Activated B cell treated with CpG ODN at 0.5 μM for 24 hours (primary cell): ENCODE measurements at regions of chr4 and their contacts with region 1.

Region 1: GRCh38 chr4:13654158-13654797 is 26.8 kb upstream of the BOD1L1 start:
- DNase-seq: peak; percentile 71
- ATAC-seq: peak; percentile 93
- H3K4me3 Mint-ChIP-seq: peak overlapping the region; percentile 85
- H3K27ac Mint-ChIP-seq: no peak overlapping the region
- H3K4me1 Mint-ChIP-seq: peaks cover 13% of the 10 kb centered on the region
- H3K27me3 Mint-ChIP-seq: peaks cover 6% of the 10 kb centered on the region
- CTCF ChIP-seq: peak; percentile 43

Region 2: DNA sequence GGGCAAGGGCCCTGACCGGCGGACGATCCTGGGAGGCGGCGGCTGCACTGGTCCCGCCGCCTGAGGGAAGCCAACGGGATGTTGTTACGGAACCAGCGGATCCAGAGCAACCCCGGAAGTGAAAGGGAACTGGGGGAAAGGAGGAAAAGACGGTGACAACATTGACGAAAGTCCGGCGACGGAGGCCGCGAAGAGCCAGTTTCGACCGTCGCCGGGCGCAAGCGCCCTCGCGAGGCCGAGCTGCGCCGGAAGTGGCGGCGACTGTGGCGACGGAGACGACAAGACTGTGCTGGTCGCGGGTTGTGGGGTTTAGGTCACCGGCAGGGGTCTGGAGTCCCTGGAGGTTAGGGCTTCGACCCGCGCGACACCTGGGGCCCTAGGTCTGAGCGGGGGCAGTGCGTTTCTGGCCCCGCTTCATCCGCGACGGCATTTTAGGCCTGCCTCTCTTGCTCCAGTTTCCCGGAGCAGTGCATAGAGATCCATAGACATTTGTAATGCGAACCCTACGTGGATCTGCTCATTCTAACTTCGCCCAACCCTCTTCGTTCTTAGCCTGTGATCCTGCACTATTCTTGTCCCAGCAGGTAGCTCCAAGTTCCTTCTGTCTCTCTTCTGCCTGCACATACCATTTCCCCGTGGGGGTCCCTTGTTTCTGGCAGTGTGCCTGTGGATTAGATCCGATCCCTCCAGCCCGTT is 26.5 kb before region 1 on chr4 and contains the start of gene BOD1L1:
- CTCF ChIA-PET with region 1: interaction called, 11 read pairs
- POLR2A ChIA-PET with region 1: no interaction called
- intact Hi-C with region 1: loop called (anchors 1 kb)
- DNase-seq: peak; percentile 80
- ATAC-seq: peak; percentile 86
- H3K4me3 Mint-ChIP-seq: peak within 1 kb of the TSS; percentile 98
- H3K27ac Mint-ChIP-seq: peak within 1 kb of the TSS; percentile 97
- H3K4me1 Mint-ChIP-seq: peaks cover 53% of the 10 kb centered on the region
- H3K27me3 Mint-ChIP-seq: no peaks in the 10 kb centered on the region
- CTCF ChIP-seq: no peak
- total RNA-seq, gene BOD1L1: 77.1 and 79.3 TPM in 2 replicates

Region 3: DNA sequence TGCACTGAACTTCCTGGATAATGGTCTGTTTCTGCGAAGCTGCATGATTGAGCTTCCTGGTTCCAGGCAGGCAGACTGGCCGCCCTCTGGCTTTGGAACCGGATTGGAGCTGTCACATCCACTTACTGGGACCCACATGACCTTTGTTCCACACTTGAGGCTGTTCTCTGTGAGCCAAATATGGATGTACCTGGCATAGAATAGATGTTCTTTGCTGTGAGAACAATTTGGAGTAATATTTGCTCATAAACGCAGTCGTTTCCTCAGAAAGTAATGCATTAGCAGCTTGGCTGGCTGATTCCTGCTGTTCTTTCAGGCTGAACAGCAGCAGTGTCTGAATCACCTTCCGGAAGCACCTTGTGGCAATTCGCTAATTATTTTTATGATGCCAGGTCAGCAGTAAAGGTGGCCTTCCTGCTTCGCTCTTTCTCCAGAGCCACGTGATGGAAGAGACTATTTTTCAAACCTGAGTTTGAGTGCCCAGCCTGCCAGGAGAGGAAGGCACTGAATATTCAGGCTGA is 51.3 kb after region 1 on chr4:
- CTCF ChIA-PET with region 1: no interaction called
- POLR2A ChIA-PET with region 1: no interaction called
- intact Hi-C with region 1: no loop called
- DNase-seq: no peak
- ATAC-seq: no peak
- H3K4me3 Mint-ChIP-seq: no peak overlapping the region
- H3K27ac Mint-ChIP-seq: no peak overlapping the region
- H3K4me1 Mint-ChIP-seq: no peaks in the 10 kb centered on the region
- H3K27me3 Mint-ChIP-seq: no peaks in the 10 kb centered on the region
- CTCF ChIP-seq: no peak

Region 4: DNA sequence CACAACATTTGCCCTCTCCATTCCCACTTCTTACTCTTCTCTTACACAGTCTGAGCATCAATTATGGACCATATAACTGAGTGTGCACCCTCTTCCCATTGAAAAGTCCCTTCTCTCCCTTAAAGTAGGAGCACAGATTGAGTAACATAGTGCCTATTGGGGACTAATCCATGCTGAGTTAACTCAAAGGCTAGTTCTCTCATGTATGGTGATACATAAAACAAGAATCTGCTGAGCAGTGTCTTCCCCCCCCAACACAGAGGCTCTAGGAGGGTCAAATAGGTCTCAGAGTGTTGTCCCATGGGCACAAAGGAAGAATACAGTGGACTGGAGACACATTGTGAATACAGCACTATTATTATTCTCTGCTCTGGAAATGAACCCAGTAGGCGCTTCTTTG is 247.9 kb after region 1 on chr4:
- CTCF ChIA-PET with region 1: no interaction called
- POLR2A ChIA-PET with region 1: no interaction called
- intact Hi-C with region 1: no loop called
- DNase-seq: no peak
- ATAC-seq: no peak
- H3K4me3 Mint-ChIP-seq: no peak overlapping the region
- H3K27ac Mint-ChIP-seq: no peak overlapping the region
- H3K4me1 Mint-ChIP-seq: no peaks in the 10 kb centered on the region
- H3K27me3 Mint-ChIP-seq: peaks cover 10% of the 10 kb centered on the region
- CTCF ChIP-seq: no peak

Region 5: GRCh38 chr4:14218641-14219040 is 564.4 kb after region 1 on chr4:
- CTCF ChIA-PET with region 1: no interaction called
- POLR2A ChIA-PET with region 1: no interaction called
- intact Hi-C with region 1: no loop called
- DNase-seq: no peak
- ATAC-seq: no peak
- H3K4me3 Mint-ChIP-seq: no peak overlapping the region
- H3K27ac Mint-ChIP-seq: no peak overlapping the region
- H3K4me1 Mint-ChIP-seq: no peaks in the 10 kb centered on the region
- H3K27me3 Mint-ChIP-seq: no peaks in the 10 kb centered on the region
- CTCF ChIP-seq: no peak

Region 6: DNA sequence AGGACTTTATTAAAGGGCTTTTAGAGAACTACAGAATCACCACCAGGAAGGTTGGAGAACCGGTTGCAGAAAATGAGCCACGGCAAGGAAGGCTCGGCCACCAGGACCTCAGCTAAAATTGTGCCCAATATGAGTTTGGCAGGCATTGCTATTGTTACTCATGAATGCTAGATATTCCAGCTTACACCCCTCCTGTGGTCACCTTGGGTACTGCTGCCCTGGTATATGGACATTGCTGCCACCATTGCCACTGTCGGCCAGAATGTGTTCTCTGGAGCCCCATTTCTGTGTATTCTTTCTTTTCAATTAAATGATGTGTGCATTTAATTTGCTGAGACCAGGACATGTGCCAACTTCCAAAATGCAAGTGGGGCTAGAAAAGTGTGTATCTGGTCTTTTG is 600.0 kb after region 1 on chr4:
- CTCF ChIA-PET with region 1: interaction called, 6 read pairs
- POLR2A ChIA-PET with region 1: no interaction called
- intact Hi-C with region 1: loop called (anchors 1 kb)
- DNase-seq: peak; percentile 23
- ATAC-seq: peak; percentile 62
- H3K4me3 Mint-ChIP-seq: no peak overlapping the region
- H3K27ac Mint-ChIP-seq: no peak overlapping the region
- H3K4me1 Mint-ChIP-seq: no peaks in the 10 kb centered on the region
- H3K27me3 Mint-ChIP-seq: no peaks in the 10 kb centered on the region
- CTCF ChIP-seq: no peak

Region 7: DNA sequence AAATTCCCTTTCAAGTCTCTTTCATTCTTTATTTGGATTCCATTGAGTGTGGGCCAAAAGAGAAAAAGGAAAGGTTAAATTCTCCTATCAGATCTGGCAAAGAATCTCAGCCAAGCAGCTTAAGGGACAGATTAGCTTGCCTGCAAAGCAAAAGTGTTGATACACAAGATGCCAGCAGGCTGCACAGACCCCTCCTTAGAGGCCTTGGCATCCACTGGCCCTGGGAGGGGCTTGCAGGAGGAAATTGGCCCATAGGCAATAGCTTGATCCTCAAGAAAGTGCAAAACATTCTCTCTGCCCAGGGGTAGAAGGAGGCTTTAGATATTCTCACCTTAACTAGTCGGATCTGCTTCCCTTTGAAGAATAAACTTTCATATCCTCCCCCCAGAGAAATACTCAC is 1047.6 kb after region 1 on chr4:
- CTCF ChIA-PET with region 1: interaction called, 3 read pairs
- POLR2A ChIA-PET with region 1: no interaction called
- intact Hi-C with region 1: loop called (anchors 10 kb)
- DNase-seq: no peak
- ATAC-seq: no peak
- H3K4me3 Mint-ChIP-seq: no peak overlapping the region
- H3K27ac Mint-ChIP-seq: no peak overlapping the region
- H3K4me1 Mint-ChIP-seq: no peaks in the 10 kb centered on the region
- H3K27me3 Mint-ChIP-seq: peaks cover 2% of the 10 kb centered on the region
- CTCF ChIP-seq: no peak

Region 8: DNA sequence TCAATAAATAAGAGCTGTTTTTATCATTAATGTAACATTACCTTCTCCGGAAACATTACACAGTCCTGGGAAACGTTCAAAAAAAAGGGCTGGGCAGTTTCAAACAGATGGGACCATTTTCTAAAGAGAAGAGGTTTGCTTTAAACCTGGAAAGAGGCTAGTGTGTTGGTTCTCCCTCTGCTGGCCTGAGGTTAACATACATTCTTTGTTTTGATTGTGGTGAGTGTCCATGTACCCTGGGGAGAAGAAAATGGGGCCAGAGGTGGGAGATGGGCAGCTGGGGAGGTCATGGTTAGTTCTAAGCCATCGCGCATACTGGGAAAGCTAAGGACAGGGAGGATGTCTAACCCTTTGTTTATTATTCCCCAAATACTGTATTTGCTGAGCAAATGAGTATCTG is 1542.7 kb after region 1 on chr4:
- CTCF ChIA-PET with region 1: no interaction called
- POLR2A ChIA-PET with region 1: no interaction called
- intact Hi-C with region 1: loop called (anchors 10 kb)
- DNase-seq: no peak
- ATAC-seq: no peak
- H3K4me3 Mint-ChIP-seq: no peak overlapping the region
- H3K27ac Mint-ChIP-seq: no peak overlapping the region
- H3K4me1 Mint-ChIP-seq: no peaks in the 10 kb centered on the region
- H3K27me3 Mint-ChIP-seq: no peaks in the 10 kb centered on the region
- CTCF ChIP-seq: no peak

Region 9: GRCh38 chr4:15457406-15458201 is 1803.3 kb after region 1 on chr4:
- CTCF ChIA-PET with region 1: interaction called, 21 read pairs
- POLR2A ChIA-PET with region 1: no interaction called
- intact Hi-C with region 1: loop called (anchors 1 kb)
- DNase-seq: no peak
- ATAC-seq: peak; percentile 99
- H3K4me3 Mint-ChIP-seq: peak overlapping the region; percentile 21
- H3K27ac Mint-ChIP-seq: peak overlapping the region; percentile 72
- H3K4me1 Mint-ChIP-seq: peaks cover 17% of the 10 kb centered on the region
- H3K27me3 Mint-ChIP-seq: peaks cover 2% of the 10 kb centered on the region
- CTCF ChIP-seq: no peak